IMR-90 (cell line): ENCODE measurements at regions of chr9 and their contacts with region 1.

Region 1: DNA sequence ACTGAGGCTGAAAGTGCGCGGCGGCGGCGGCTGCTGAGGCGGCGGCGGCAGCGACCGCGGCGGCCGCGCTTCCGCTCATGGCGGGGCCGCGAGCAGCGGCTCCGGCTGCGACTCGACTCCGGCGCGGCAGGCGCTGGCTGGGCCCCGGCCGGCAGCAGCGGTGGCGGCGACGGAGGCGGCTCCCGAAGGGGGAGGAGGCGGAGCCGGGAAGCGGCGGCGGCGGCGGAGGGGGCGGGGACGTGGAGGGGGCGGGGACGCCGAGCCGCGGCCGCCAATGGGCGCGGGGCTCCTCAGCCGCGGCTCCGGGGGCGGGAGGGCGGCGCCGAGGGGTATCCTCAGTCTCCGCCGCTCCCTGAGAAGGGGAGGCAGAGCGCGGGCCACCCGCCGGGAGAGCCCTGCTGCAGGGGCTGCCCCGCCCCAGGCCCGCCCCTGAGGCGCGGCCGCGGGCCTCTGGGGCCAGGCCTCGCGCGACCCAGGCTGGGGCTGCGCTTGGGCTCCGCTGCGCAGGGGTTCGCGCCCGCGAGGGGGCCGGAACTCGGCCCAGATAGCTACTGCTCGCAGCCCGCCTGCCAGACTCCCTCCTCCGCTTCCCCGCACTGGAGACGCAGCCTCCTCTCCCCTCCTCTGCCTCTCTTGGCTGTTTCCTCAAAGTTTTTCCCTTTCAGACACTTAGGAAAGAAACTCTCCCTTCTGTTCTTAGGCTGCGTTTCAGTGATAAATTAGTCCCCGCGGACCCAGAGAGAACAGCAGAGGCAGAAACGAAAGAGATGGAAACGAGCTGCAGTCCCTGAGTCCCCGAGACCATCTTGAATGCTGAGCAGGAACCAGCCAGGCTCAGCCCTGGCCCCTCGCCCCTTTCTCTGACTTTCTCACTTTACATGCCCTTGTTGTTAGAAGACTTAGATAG is 85.0 kb upstream of the MELK start:
- DNase-seq: peak; percentile 90
- ATAC-seq: peak; percentile 95
- H3K4me3 ChIP-seq: peak overlapping the region; percentile 98
- H3K27ac ChIP-seq: peak overlapping the region; percentile 85
- H3K4me1 ChIP-seq: peaks cover 7% of the 10 kb centered on the region
- H3K27me3 ChIP-seq: no peaks in the 10 kb centered on the region
- CTCF ChIP-seq: no peak
- POLR2A ChIP-seq: peak; percentile 65; the same call in 1 of the 2 replicates
- RAD21 ChIP-seq: no peak

Region 2: DNA sequence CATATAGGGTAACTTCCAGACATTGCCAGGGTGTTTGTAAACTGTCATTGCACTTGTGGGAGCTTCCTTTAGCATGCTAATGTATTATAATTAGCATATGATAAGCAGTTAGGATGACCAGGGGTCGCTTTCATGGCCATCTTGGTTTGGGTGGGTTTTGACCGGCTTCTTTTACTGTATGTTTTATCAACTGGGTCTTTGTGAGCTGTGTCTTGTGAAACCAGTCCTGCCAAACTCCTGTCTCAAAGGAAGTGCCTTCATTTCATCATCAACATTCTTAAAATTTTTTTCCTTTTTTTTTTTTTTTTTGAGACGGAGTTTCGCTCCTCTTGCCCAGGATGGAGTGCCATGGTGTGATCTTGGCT is 73.1 kb after region 1 on chr9:
- CTCF ChIA-PET with region 1: no interaction called
- POLR2A ChIA-PET with region 1: no interaction called
- dilution Hi-C with region 1: no loop called
- in situ Hi-C with region 1: no loop called
- intact Hi-C with region 1: loop called (anchors 5 kb)
- DNase-seq: peak; percentile 40
- ATAC-seq: peak; percentile 30
- H3K4me3 ChIP-seq: no peak overlapping the region
- H3K27ac ChIP-seq: no peak overlapping the region
- H3K4me1 ChIP-seq: peaks cover 5% of the 10 kb centered on the region; the same call in 1 of the 2 replicates
- H3K27me3 ChIP-seq: no peaks in the 10 kb centered on the region
- CTCF ChIP-seq: no peak
- POLR2A ChIP-seq: no peak
- RAD21 ChIP-seq: no peak